Activated CD8-positive, alpha-beta T cell treated with anti-CD3 and anti-CD28 coated beads, Interleukin-2, amount 10 ng/mL, durations not matched to agents 7 days and 5 days (primary cell): ENCODE measurements at regions of chr13 and their contacts with region 1.

Region 1: GRCh38 chr13:99269627-99270241 is 11.6 kb upstream of the GPR18 start:
- DNase-seq: peak; percentile 46
- ATAC-seq: peak; percentile 62
- H3K4me3 Mint-ChIP-seq: no peak overlapping the region
- H3K27ac Mint-ChIP-seq: no peak overlapping the region
- H3K4me1 Mint-ChIP-seq: peaks cover 64% of the 10 kb centered on the region
- H3K27me3 Mint-ChIP-seq: no peaks in the 10 kb centered on the region

Region 2: DNA sequence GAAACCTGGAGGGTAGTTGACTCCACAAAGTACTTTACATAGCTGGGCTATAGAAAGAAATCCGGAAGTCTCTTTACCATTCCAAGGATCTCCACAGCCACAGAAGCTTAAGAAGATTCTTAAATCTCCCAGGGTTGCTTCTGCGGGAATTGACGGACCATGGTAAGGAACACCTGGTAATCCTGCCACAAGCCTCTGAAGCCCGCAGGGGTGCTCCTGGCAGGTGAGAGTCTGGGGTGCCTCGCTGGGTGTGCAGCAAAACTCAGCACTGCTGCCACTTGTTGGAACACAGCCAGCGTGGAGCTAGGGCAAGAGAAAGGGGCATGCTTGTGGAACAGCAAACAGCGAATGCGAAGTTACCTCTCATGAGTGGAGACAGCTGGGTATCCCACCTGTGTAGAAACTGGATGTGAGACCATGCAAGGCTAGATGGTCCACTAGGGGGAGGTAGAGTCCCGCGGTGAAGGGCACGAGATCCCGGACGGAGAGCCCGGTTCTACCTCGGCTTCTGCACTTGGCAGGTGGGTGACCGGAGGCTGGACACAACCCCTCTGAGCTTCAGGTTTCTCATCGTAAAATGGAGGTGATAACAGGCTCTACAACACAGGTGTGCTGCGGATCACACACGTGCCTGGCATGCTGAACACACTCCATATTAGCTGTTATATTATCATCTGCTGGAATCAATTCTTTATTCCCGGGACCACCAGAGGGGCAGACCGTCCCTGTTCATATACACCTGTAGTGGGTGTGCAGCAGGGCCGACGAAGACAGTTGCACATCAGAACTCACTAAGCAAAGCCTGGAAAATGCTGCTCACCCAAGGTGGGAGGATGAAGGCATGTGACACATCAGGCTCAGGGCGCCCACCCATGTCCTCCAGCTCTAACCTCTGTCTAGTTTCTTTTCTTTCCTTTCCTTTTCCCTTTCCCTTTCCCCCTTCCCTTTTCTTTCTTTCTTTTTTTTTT is 93.1 kb before region 1 on chr13:
- CTCF ChIA-PET with region 1: interaction called, 319 read pairs
- POLR2A ChIA-PET with region 1: no interaction called
- DNase-seq: peak; percentile 88
- ATAC-seq: peak; percentile 93
- H3K4me3 Mint-ChIP-seq: peak overlapping the region; percentile 35
- H3K27ac Mint-ChIP-seq: peak overlapping the region; percentile 28
- H3K4me1 Mint-ChIP-seq: peaks cover 38% of the 10 kb centered on the region
- H3K27me3 Mint-ChIP-seq: peaks cover 5% of the 10 kb centered on the region

Region 3: GRCh38 chr13:99281811-99282263 is 12.1 kb after region 1 on chr13:
- CTCF ChIA-PET with region 1: interaction called, 28 read pairs
- POLR2A ChIA-PET with region 1: interaction called, 3 read pairs
- DNase-seq: peak; percentile 54
- ATAC-seq: peak; percentile 67
- H3K4me3 Mint-ChIP-seq: no peak overlapping the region
- H3K27ac Mint-ChIP-seq: peak overlapping the region; percentile 79
- H3K4me1 Mint-ChIP-seq: peaks cover 89% of the 10 kb centered on the region
- H3K27me3 Mint-ChIP-seq: no peaks in the 10 kb centered on the region

Region 4: GRCh38 chr13:99307648-99308339 is 38.1 kb after region 1 on chr13:
- CTCF ChIA-PET with region 1: interaction called, 23 read pairs
- POLR2A ChIA-PET with region 1: interaction called, 3 read pairs
- DNase-seq: peak; percentile 64
- ATAC-seq: peak; percentile 67
- H3K4me3 Mint-ChIP-seq: peak overlapping the region; percentile 73
- H3K27ac Mint-ChIP-seq: peak overlapping the region; percentile 89
- H3K4me1 Mint-ChIP-seq: peaks cover 76% of the 10 kb centered on the region
- H3K27me3 Mint-ChIP-seq: no peaks in the 10 kb centered on the region

Region 5: GRCh38 chr13:99366075-99366987 is 96.6 kb after region 1 on chr13:
- CTCF ChIA-PET with region 1: interaction called, 15 read pairs
- POLR2A ChIA-PET with region 1: no interaction called
- DNase-seq: peak; percentile 19
- ATAC-seq: no peak
- H3K4me3 Mint-ChIP-seq: no peak overlapping the region
- H3K27ac Mint-ChIP-seq: peak overlapping the region; percentile 10
- H3K4me1 Mint-ChIP-seq: peaks cover 69% of the 10 kb centered on the region
- H3K27me3 Mint-ChIP-seq: no peaks in the 10 kb centered on the region

Region 6: DNA sequence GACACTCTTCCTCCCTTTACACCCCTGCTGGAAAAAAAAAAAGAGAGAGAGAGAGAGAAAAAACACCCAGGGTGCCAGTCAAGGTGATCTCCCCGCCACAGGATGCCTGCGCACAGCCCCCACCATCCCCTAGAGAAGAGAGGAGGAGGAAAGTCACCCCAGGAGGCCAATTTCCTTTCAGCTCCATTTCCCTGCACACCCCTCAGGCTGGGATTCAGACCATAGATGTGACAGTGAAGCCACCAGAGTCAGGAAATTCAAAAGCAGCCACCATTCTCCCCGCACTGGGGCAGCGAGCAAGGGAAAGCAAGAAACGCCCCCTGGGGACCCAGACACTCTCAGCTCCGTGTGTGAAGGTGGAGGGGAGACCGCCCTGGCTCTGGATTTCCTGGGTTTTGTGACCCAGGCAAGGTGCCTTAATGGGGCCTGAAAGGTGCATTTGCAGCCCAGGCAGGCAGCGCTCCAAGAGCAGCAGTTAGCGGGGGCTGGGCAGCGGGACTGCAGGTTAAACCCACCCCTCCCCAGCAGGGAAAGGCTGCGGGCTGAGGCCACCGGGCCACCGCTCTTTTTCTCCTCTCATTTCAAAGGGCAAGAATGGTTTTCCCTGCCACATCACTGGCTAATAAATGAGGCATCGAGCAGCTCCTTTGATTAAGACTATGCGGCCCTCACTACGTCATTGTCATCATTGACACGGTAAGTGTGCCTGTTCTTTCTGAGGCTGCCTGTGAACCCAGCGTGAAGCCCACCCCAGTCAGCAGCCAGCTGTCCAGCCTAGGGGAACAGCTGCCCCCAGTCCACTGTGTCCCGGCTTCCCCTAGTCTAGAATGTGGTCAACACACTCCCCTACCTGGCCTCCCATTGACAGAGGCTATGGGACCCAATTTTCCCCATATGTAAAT is 147.7 kb after region 1 on chr13:
- CTCF ChIA-PET with region 1: interaction called, 16 read pairs
- POLR2A ChIA-PET with region 1: no interaction called
- DNase-seq: no peak
- ATAC-seq: no peak
- H3K4me3 Mint-ChIP-seq: peak overlapping the region; percentile 35
- H3K27ac Mint-ChIP-seq: peak overlapping the region; percentile 76
- H3K4me1 Mint-ChIP-seq: peaks cover 39% of the 10 kb centered on the region
- H3K27me3 Mint-ChIP-seq: no peaks in the 10 kb centered on the region